Ovary (tissue), 10 donors: ENCODE measurements at regions of chr11 and their contacts with region 1.

Region 1: GRCh38 chr11:65637794-65638317 is at the start of gene SIPA1:
- DNase-seq: peak; percentile 79 to 88 (median 83)
- H3K4me3 ChIP-seq: peak within 1 kb of the TSS; percentile 47
- H3K27ac ChIP-seq: peak within 1 kb of the TSS; percentile 59 to 85
- H3K4me1 ChIP-seq: peaks cover 6% of the 10 kb centered on the region
- H3K27me3 ChIP-seq: no peaks in the 10 kb centered on the region
- CTCF ChIP-seq: peak in 2 of 3 donors; percentile 39 to 41
- EP300 ChIP-seq: no peak
- POLR2A ChIP-seq: peak; percentile 59
- total RNA-seq, gene SIPA1: 15.0 to 48.2 (median 42.6) TPM

Region 2: GRCh38 chr11:65700391-65700790 is 62.5 kb after region 1 on chr11:
- intact Hi-C with region 1: loop called in 1 of 4 experiments (anchors 10 kb)
- DNase-seq: no peak
- H3K4me3 ChIP-seq: no peak overlapping the region
- H3K27ac ChIP-seq: no peak overlapping the region
- H3K4me1 ChIP-seq: no peaks in the 10 kb centered on the region
- H3K27me3 ChIP-seq: no peaks in the 10 kb centered on the region
- CTCF ChIP-seq: no peak
- EP300 ChIP-seq: no peak
- POLR2A ChIP-seq: no peak